ENCODE measurements at regions of chr19 and their contacts with region 1.

Region 1: DNA sequence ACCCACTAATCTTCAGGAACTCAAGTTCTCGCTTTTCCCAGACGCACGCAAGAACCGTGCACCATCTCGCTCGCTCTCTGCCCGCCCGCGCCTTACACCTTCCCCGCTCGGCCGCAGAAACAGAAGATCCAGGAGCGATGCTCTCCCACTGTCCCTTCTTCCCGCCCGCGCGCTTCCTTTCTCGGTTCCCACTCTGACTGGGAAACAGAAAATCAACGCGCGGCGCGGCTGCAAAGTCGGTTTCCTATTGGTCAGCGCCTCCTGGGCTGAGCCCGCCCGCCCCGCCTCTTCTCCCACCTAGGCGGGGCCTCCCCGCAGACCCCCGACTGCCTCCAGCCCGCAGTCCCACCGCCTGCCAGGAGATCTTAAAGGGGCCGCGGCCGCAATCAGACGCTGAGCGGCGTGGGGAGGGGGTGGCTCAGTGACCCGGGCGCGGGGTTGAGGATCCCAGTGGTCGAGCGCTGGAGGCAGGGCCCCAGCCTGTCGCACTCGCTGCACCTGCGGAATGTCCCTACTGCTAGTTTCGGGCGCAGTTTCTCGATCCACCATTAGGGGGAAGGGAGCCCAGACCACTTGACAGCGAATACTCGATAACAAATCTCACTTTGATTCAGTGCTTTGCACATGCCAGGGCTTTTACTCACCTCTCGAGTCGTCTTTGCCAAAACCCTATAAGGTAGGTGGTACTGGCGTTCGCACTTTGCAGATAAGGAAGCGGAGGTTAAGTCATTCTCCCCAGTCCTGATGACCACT is 685 bp upstream of the SLC25A23 start:
- DNase-seq: peak; percentile 95
- H3K4me3 Mint-ChIP-seq: peak overlapping the region; percentile 89
- H3K27ac Mint-ChIP-seq: peak overlapping the region; percentile 84
- H3K4me1 Mint-ChIP-seq: peaks cover 21% of the 10 kb centered on the region
- H3K27me3 Mint-ChIP-seq: peaks cover 4% of the 10 kb centered on the region

Region 2: GRCh38 chr19:6362027-6362350 is 98.3 kb before region 1 on chr19:
- intact Hi-C with region 1: loop called (anchors 1 kb)
- DNase-seq: no peak
- H3K4me3 Mint-ChIP-seq: peak overlapping the region; percentile 98
- H3K27ac Mint-ChIP-seq: peak overlapping the region; percentile 96
- H3K4me1 Mint-ChIP-seq: peaks cover 13% of the 10 kb centered on the region
- H3K27me3 Mint-ChIP-seq: no peaks in the 10 kb centered on the region

Region 3: GRCh38 chr19:6393074-6393983 is 66.9 kb before region 1 on chr19 and contains the start of gene GTF2F1:
- intact Hi-C with region 1: loop called (anchors 1 kb)
- DNase-seq: peak; percentile 87
- H3K4me3 Mint-ChIP-seq: peak within 1 kb of the TSS; percentile 98
- H3K27ac Mint-ChIP-seq: peak within 1 kb of the TSS; percentile 97
- H3K4me1 Mint-ChIP-seq: peaks cover 29% of the 10 kb centered on the region
- H3K27me3 Mint-ChIP-seq: no peaks in the 10 kb centered on the region
- total RNA-seq, gene GTF2F1: 62.9 and 65.5 TPM in 2 replicates

Region 4: GRCh38 chr19:6450166-6450565 is 10.1 kb before region 1 on chr19:
- intact Hi-C with region 1: no loop called
- DNase-seq: no peak
- H3K4me3 Mint-ChIP-seq: no peak overlapping the region
- H3K27ac Mint-ChIP-seq: no peak overlapping the region
- H3K4me1 Mint-ChIP-seq: no peaks in the 10 kb centered on the region
- H3K27me3 Mint-ChIP-seq: no peaks in the 10 kb centered on the region

Region 5: GRCh38 chr19:6481541-6482342 is 21.5 kb after region 1 on chr19 and contains the start of gene DENND1C:
- intact Hi-C with region 1: loop called (anchors 1 kb)
- DNase-seq: peak; percentile 61
- H3K4me3 Mint-ChIP-seq: peak within 1 kb of the TSS; percentile 91
- H3K27ac Mint-ChIP-seq: peak within 1 kb of the TSS; percentile 89
- H3K4me1 Mint-ChIP-seq: peaks cover 23% of the 10 kb centered on the region
- H3K27me3 Mint-ChIP-seq: no peaks in the 10 kb centered on the region
- total RNA-seq, gene DENND1C: 68.4 and 75.6 TPM in 2 replicates

Region 6: DNA sequence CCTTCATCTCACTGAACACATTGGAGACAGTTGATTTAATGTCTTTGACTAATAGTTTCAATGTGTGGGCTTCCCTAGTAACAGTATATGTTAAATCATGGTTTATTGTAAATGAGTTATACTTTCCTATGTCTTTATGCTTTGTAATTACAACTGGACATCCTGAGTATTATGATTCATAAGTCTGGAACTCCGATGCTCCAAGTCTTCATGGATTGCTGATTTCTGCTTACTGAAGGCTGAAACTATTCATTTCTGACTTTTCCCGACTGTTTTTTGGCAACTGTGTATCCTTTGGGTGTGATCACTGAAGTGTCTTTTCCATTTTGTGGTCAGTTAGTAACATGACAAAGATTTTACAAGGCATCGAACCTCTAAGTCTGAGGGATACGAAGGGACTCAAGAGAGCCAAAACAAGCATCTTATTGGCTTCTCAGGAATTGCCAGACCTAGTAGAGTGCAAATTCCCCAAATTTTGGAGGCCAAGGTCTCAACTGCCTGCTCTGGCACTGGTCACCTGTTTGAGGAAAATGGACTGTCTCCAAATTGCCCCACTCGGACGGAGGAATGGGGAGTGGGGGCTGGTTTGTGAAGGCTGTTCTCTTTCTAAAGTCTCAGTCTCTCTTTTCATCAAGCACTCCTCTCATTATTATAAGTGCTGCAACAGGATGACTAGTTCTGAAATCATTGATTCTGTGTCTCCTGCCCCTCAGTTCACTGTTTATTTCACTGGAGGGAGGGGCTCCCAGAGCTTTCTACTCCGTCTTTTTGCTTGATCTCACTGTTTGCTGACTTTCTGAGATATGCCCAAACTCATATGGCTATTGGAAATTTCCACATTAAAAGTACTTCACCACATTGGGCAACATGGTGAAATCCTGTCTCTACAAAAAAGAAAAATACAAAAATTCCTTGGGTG is 150.9 kb after region 1 on chr19:
- intact Hi-C with region 1: loop called (anchors 1 kb)
- DNase-seq: no peak
- H3K4me3 Mint-ChIP-seq: no peak overlapping the region
- H3K27ac Mint-ChIP-seq: no peak overlapping the region
- H3K4me1 Mint-ChIP-seq: peaks cover 25% of the 10 kb centered on the region
- H3K27me3 Mint-ChIP-seq: peaks cover 27% of the 10 kb centered on the region